Activated CD4-positive, alpha-beta memory T cell treated with anti-CD3 and anti-CD28 coated beads for 36 hours (primary cell): ENCODE measurements at regions of chr11 and their contacts with region 1.

Region 1: DNA sequence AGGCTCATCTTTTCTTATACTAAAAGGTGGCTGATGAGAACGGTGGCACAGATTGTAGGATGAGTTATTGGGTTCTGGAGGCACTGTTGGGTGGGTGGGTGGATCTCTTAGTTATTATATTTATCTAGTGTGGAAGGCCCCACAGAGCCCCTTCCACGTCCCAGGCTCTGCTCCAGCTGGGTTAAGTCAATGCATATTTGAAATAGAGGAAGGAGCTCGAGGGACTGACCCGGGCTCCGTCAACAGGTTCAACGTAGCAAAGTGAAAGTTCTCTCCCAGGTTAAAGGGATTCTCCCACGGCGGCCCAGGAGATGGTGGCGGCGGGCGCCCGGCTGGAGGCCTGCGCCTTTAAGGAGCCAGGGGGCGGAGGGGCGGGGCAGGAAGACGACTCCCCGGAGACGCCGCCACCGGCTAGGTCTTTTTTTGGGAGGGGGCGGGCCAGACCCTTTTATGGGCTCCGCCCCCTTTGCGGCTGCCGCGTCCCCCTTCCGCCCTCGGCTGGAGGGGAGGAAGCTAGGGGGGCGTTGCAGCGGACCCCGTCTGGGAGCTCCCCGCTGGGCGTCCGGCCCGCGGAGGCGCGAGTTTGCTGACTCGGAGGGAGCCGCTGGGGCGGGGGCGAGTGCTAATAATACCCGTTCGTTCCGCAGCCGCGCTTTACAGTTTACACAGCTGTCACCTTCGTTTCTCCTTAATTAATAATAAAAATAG is 1.5 kb upstream of the INPPL1 start:
- DNase-seq: peak; percentile 95
- H3K4me3 Mint-ChIP-seq: peak overlapping the region; percentile 75
- H3K27ac Mint-ChIP-seq: peak overlapping the region; percentile 77
- H3K4me1 Mint-ChIP-seq: peaks cover 24% of the 10 kb centered on the region
- H3K27me3 Mint-ChIP-seq: peaks cover 5% of the 10 kb centered on the region

Region 2: GRCh38 chr11:71774603-71775222 is 448.3 kb before region 1 on chr11:
- CTCF ChIA-PET with region 1: no interaction called
- POLR2A ChIA-PET with region 1: no interaction called
- intact Hi-C with region 1: no loop called
- DNase-seq: no peak
- H3K4me3 Mint-ChIP-seq: no peak overlapping the region
- H3K27ac Mint-ChIP-seq: no peak overlapping the region
- H3K4me1 Mint-ChIP-seq: no peaks in the 10 kb centered on the region
- H3K27me3 Mint-ChIP-seq: no peaks in the 10 kb centered on the region

Region 3: DNA sequence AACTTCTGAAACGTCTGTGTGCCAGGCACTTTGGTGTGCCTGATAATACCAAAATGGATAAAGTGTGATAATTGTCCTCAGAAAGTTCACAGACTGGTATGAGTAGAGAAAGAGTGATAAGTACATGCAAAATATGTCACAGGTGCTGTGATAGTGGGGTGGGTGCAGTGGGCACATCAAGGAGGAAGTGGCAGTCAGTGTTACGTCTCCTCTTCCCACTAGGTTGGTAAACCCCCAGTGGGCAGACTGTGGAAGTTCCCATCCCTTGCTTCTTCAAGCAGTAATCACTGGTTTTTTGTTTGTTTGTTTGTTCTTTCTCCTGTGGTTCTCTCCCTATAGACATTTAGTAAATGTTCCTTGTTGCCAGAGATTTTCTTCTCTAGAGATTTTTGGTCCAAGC is 288.8 kb before region 1 on chr11:
- CTCF ChIA-PET with region 1: no interaction called
- POLR2A ChIA-PET with region 1: no interaction called
- intact Hi-C with region 1: loop called (anchors 5 kb)
- DNase-seq: peak; percentile 27
- H3K4me3 Mint-ChIP-seq: no peak overlapping the region
- H3K27ac Mint-ChIP-seq: peak overlapping the region; percentile 2
- H3K4me1 Mint-ChIP-seq: peaks cover 49% of the 10 kb centered on the region
- H3K27me3 Mint-ChIP-seq: no peaks in the 10 kb centered on the region

Region 4: GRCh38 chr11:72040726-72041441 is 182.2 kb before region 1 on chr11:
- CTCF ChIA-PET with region 1: no interaction called
- POLR2A ChIA-PET with region 1: no interaction called
- intact Hi-C with region 1: loop called (anchors 1 kb)
- DNase-seq: peak; percentile 83
- H3K4me3 Mint-ChIP-seq: no peak overlapping the region
- H3K27ac Mint-ChIP-seq: no peak overlapping the region
- H3K4me1 Mint-ChIP-seq: peaks cover 34% of the 10 kb centered on the region
- H3K27me3 Mint-ChIP-seq: no peaks in the 10 kb centered on the region

Region 5: GRCh38 chr11:72238040-72238450 is 15.0 kb after region 1 on chr11:
- CTCF ChIA-PET with region 1: interaction called, 21 read pairs
- POLR2A ChIA-PET with region 1: interaction called, 9 read pairs
- intact Hi-C with region 1: no loop called
- DNase-seq: peak; percentile 72
- H3K4me3 Mint-ChIP-seq: no peak overlapping the region
- H3K27ac Mint-ChIP-seq: no peak overlapping the region
- H3K4me1 Mint-ChIP-seq: peaks cover 12% of the 10 kb centered on the region
- H3K27me3 Mint-ChIP-seq: peaks cover 33% of the 10 kb centered on the region

Region 6: GRCh38 chr11:72257561-72257960 is 34.5 kb after region 1 on chr11:
- CTCF ChIA-PET with region 1: no interaction called
- POLR2A ChIA-PET with region 1: no interaction called
- intact Hi-C with region 1: no loop called
- DNase-seq: no peak
- H3K4me3 Mint-ChIP-seq: no peak overlapping the region
- H3K27ac Mint-ChIP-seq: no peak overlapping the region
- H3K4me1 Mint-ChIP-seq: no peaks in the 10 kb centered on the region
- H3K27me3 Mint-ChIP-seq: peaks cover 13% of the 10 kb centered on the region